KBM-7 (cell line): ENCODE measurements at regions of chr3 and their contacts with region 1.

Region 1: DNA sequence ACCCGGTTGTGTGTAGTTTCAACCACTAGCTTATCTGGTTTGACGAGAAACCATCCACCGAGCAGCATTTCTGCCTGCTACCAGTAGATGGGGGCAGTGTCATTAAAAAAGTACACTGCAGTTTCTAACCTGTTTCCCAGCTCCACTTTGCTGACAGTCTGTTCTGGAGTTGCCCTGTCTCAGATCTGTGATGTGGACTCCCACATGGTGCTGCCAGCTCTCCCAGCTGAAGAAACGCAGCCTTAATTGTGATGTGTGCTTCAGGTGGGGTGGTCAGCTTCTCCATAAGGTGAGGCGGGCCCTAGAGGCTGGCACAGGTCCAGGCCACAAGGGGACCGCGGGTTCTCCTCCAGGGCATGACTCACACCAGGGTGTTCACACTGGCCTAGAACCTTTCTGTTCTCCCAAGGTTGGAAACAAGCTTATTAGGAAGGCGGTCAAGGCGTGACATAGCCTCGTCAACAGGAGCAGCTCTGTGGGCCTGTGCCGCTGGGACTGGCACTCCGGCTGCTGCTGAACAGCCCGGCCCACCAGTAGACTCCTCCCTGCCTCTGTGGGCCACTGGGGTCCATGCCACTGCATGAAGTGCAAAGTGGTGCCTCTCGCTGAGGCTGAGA is 2.9 kb upstream of the FAM43A start:
- DNase-seq: peak; percentile 92

Region 2: DNA sequence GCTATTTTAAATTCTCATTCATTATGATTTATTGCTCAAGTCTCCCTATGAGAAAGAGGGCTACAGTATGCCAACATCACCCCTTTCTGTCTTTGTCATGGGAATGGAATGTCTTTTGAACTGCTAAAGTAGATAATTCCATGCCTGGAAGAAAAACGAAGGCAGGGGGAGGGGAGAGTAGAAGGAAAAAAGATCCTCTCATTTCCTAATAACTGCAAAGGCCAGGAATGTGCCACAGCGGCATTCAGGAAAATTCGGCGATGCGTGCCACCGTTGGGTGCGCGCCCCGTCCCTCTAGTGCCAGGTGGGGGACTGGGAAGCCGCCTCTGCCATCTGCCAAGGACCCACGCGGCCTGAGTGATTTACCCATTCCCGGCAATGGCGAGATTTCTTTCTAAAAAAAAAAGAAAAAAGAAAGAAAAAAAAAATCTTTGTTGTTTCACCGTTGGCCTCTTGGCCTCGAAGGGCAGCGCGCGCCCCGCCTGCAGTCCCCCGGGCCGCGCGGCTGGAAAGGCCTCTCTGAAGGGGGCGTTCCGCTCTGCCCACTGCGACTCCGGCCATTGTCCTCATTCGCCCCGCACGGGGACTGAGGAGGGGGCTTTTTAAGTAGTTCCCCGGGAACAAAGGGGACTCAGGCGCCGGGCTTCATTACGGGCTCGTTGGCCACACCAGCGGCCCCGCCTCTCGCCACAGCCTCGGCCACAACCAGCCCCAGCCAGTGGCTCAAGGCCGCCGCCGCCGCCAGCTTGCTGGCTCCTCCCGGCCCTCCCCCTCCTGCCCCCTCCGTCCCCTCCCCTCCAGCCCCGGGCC is 386.1 kb before region 1 on chr3:
- in situ Hi-C with region 1: no loop called
- DNase-seq: no peak

Region 3: GRCh38 chr3:195106418-195106906 is 423.7 kb after region 1 on chr3:
- in situ Hi-C with region 1: loop called (anchors 25 kb)
- DNase-seq: peak; percentile 62

Region 4: DNA sequence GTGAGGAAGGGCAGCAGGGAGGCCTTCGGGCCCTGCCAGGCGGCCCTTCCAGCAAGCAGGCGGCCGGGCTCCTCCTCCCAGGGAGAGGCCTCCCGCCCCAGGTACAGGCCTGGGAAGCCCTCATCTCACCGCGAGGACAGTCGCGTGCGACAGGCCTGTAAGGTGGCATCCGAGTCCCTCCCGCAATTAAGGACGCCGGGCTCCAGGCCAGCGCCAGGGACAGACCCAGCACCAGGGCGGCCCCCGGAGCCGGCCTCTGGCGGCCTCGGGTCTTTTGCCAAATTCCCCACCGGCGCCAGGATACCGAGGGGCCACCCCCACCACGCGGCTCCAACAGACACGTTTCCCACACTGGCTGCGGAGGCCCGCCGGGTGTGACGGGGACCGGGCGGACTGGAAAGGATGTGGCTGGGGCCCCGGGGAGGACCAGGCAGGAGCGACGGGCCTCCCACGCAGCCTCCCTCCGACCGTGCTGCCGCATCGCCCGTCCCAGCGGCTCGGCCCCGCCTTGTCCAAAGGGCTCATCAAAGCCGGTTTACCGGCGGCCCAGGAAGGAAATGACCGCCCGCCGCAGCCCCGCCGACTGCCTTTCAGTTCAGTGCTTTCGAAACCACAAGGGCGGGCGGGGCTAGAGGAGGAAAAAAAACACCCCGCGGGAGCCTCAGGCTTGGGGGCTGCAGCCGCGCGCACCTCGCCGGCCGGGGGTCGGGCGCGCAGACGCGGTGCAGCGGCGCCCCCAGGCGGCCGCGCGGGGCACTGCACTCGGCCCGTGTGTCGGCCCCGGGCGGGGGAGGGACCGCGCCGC is 576.9 kb after region 1 on chr3:
- in situ Hi-C with region 1: loop called (anchors 10 kb)
- DNase-seq: peak; percentile 98

Region 5: DNA sequence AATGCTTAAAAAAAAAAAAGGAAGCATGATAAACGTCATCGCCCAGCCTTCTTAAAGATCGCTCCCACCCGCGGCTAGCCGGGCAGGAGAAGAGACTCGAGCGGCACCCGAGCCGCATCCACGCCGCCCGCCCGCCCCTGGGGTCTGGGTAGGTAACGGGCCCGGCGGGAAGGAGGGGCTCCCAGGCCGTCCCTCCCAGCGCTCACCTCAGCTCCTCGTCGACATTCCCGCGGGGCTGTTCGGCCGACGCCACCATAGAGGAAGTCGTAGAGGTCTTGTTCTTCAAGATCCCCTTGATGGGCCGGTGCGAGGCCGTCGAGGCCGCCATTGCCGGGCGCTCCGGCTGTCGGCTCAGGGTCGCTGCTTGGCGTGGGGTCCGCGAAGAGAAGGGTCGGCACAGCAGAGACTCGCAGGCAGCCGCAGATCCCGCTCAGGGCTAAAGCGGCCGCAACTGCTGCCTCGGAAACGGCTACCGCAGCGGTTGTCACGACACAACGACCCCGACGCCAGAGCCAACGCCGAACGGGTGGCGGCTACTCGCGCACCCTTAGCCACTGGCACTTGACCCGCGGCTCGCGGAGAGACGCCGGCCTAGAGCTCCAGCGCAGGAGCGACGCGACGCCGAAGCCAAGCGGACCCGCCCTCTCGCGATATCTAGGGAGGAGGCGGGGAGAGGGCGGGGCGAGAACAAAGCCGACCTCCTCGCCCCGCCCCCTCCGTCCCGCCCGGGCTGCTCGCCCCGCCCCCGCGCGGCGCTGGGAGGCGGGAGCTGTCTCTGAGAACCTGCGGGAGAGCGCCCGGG is 860.1 kb after region 1 on chr3 and contains the start of gene PPP1R2:
- in situ Hi-C with region 1: loop called (anchors 25 kb)
- DNase-seq: peak; percentile 75